Dendritic cell treated with granulocyte-macrophage colony-stimulating factor and Interleukin-4, amounts not matched to agents 40 ng/mL and 50 ng/mL, for 4 days (primary cell): ENCODE measurements at regions of chr10 and their contacts with region 1.

Region 1: GRCh38 chr10:46228563-46229071 is 58.2 kb upstream of the ANTXRL start:
- H3K4me3 Mint-ChIP-seq: no peak overlapping the region
- H3K27ac Mint-ChIP-seq: no peak overlapping the region
- H3K4me1 Mint-ChIP-seq: peaks cover 4% of the 10 kb centered on the region
- H3K27me3 Mint-ChIP-seq: peaks cover 3% of the 10 kb centered on the region

Region 2: GRCh38 chr10:46544989-46545791 is 316.6 kb after region 1 on chr10:
- intact Hi-C with region 1: loop called (anchors 10 kb)
- H3K4me3 Mint-ChIP-seq: no peak overlapping the region
- H3K27ac Mint-ChIP-seq: no peak overlapping the region
- H3K4me1 Mint-ChIP-seq: peaks cover 12% of the 10 kb centered on the region
- H3K27me3 Mint-ChIP-seq: peaks cover 41% of the 10 kb centered on the region